CD4-positive, alpha-beta T cell (primary cell): ENCODE measurements at regions of chr1 and their contacts with region 1.

Region 1: GRCh38 chr1:206808615-206809014 is 36.3 kb upstream of the IL10 start:
- DNase-seq: peak in 13 of 14 experiments; percentile 15 to 82 (median 41)
- ATAC-seq: peak; percentile 85
- H3K4me3 ChIP-seq: no peak overlapping the region
- H3K4me3 Mint-ChIP-seq: no peak overlapping the region
- H3K27ac ChIP-seq: no peak overlapping the region
- H3K27ac Mint-ChIP-seq: peak overlapping the region; percentile 28
- H3K4me1 ChIP-seq: peaks cover 34% of the 10 kb centered on the region
- H3K4me1 Mint-ChIP-seq: peaks cover 50% of the 10 kb centered on the region
- H3K27me3 ChIP-seq: no peaks in the 10 kb centered on the region
- H3K27me3 Mint-ChIP-seq: no peaks in the 10 kb centered on the region
- CTCF ChIP-seq: peak; percentile 40

Region 2: GRCh38 chr1:206725109-206725963 is 83.3 kb before region 1 on chr1:
- CTCF ChIA-PET with region 1: interaction called, 20 read pairs
- POLR2A ChIA-PET with region 1: interaction called, 4 read pairs
- intact Hi-C with region 1: no loop called
- DNase-seq: peak; percentile 40 to 82 (median 55)
- ATAC-seq: peak; percentile 54
- H3K4me3 ChIP-seq: no peak overlapping the region
- H3K4me3 Mint-ChIP-seq: no peak overlapping the region
- H3K27ac ChIP-seq: no peak overlapping the region
- H3K27ac Mint-ChIP-seq: peak overlapping the region; percentile 62
- H3K4me1 ChIP-seq: peaks cover 51% of the 10 kb centered on the region
- H3K4me1 Mint-ChIP-seq: peaks cover 50% of the 10 kb centered on the region
- H3K27me3 ChIP-seq: no peaks in the 10 kb centered on the region
- H3K27me3 Mint-ChIP-seq: no peaks in the 10 kb centered on the region
- CTCF ChIP-seq: peak; percentile 47

Region 3: GRCh38 chr1:206761159-206761768 is 47.4 kb before region 1 on chr1:
- CTCF ChIA-PET with region 1: interaction called, 8 read pairs
- POLR2A ChIA-PET with region 1: interaction called, 42 read pairs
- intact Hi-C with region 1: loop called in 1 of 2 experiments (anchors 1 kb)
- DNase-seq: no peak
- ATAC-seq: no peak
- H3K4me3 ChIP-seq: no peak overlapping the region
- H3K4me3 Mint-ChIP-seq: no peak overlapping the region
- H3K27ac ChIP-seq: no peak overlapping the region
- H3K27ac Mint-ChIP-seq: no peak overlapping the region
- H3K4me1 ChIP-seq: peaks cover 34% of the 10 kb centered on the region
- H3K4me1 Mint-ChIP-seq: peaks cover 39% of the 10 kb centered on the region
- H3K27me3 ChIP-seq: no peaks in the 10 kb centered on the region
- H3K27me3 Mint-ChIP-seq: no peaks in the 10 kb centered on the region
- CTCF ChIP-seq: no peak

Region 4: DNA sequence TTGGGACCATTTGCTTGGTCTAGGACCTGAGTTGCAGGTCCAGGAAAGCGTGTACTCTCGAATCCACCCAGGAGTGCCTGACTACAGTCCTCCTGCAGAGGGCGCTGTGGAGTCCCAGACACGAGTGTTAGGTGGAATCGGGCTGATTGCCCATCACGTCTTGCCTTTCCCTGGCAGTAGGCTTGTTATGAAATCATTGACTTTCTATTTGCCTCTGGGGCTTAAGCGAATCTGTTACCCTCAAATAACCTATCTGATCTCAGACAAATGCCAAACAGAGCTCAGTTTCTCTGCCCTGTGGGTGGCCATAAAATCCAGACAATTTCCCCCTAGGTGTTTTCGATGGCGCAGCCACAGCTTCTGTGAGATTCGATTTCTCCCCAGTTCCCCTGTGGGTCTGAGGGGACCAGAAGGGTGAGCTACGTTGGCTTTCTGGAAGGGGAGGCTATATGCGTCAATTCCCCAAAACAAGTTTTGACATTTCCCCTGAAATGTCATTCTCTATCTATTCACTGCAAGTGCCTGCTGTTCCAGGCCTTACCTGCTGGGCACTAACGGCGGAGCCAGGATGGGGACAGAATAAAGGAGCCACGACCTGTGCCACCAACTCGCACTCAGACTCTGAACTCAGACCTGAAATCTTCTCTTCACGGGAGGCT is 56.5 kb after region 1 on chr1 and contains the start of gene IL20:
- CTCF ChIA-PET with region 1: interaction called, 3 read pairs
- POLR2A ChIA-PET with region 1: interaction called, 4 read pairs
- intact Hi-C with region 1: loop called in 1 of 2 experiments (anchors 5 kb)
- DNase-seq: peak; percentile 79 to 93 (median 85)
- ATAC-seq: peak; percentile 98
- H3K4me3 ChIP-seq: no peak within 1 kb of the TSS
- H3K4me3 Mint-ChIP-seq: no peak within 1 kb of the TSS
- H3K27ac ChIP-seq: no peak within 1 kb of the TSS
- H3K27ac Mint-ChIP-seq: no peak within 1 kb of the TSS
- H3K4me1 ChIP-seq: peaks cover 5% of the 10 kb centered on the region
- H3K4me1 Mint-ChIP-seq: peaks cover 7% of the 10 kb centered on the region
- H3K27me3 ChIP-seq: peaks cover 0 to 2% of the 10 kb centered on the region in 2 experiments
- H3K27me3 Mint-ChIP-seq: peaks cover 12% of the 10 kb centered on the region
- CTCF ChIP-seq: peak; percentile 87
- total RNA-seq, gene IL20: not detected